H1 (cell line): ENCODE measurements at regions of chr6 and their contacts with region 1.

Region 1: DNA sequence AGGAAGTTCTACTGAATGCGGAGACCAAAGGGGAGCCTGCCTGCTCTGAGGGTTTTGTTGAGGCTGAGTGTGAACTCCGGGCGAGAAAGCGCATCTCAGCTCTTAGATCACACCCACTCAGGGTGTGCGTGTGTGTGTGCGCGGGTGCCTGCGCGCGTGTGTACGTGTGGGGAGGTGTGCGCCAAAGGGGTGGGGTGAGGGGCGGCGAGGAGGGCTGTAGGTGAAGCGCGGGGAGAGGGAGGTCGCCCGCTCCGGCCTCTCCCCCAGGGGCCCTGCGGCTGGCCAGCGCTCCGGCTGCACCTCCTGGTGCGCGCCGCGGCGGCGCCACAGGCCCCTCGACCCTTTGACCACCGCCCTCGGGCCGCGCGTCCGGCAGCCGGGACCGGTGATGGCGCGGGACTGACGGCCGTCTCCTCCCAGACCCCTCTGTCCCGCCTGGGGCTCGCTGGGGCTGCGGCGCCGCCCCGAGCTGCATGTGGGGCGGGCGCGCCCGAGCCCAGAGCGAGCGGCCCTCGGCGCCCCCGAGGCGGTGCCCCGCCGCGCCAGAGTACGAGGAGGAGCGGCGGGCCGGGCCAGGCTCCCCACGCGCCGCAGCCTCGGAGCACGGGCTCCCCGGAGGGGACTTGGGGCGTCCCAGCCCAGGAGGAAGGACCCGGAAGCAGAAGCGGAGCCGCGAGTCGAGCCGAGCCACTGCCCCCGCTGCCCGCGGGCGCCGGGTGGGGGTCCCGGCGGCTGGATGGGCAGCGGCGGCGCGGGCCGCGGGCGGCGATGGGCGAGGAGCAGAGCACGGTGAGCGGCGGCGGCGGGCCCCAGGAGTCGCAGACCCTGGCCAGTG is at the start of gene RNF217:
- DNase-seq: peak in 1 of 2 experiments; percentile 77
- H3K4me3 ChIP-seq: peak within 1 kb of the TSS; percentile 69 to 92 (median 81)
- H3K27ac ChIP-seq: no peak within 1 kb of the TSS; the same call in 1 of the 2 replicates
- H3K4me1 ChIP-seq: peaks cover 0 to 2% (median 0%) of the 10 kb centered on the region in 4 experiments; a peak in 2 of 7 replicates
- H3K27me3 ChIP-seq: peaks cover 0 to 5% (median 2%) of the 10 kb centered on the region in 4 experiments; a peak in 2 of 7 replicates
- CTCF ChIP-seq: no peak
- EP300 ChIP-seq: no peak
- POLR2A ChIP-seq: no peak
- RAD21 ChIP-seq: no peak
- total RNA-seq, gene RNF217: 8.9 and 12.0 TPM in 2 replicates

Region 2: GRCh38 chr6:124901084-124901483 is 60.9 kb before region 1 on chr6:
- CTCF ChIA-PET with region 1: no interaction called
- POLR2A ChIA-PET with region 1: no interaction called
- DNase-seq: no peak
- H3K4me3 ChIP-seq: no peak overlapping the region
- H3K27ac ChIP-seq: no peak overlapping the region
- H3K4me1 ChIP-seq: no peaks in the 10 kb centered on the region
- H3K27me3 ChIP-seq: no peaks in the 10 kb centered on the region
- CTCF ChIP-seq: no peak
- EP300 ChIP-seq: no peak
- POLR2A ChIP-seq: no peak
- RAD21 ChIP-seq: no peak

Region 3: DNA sequence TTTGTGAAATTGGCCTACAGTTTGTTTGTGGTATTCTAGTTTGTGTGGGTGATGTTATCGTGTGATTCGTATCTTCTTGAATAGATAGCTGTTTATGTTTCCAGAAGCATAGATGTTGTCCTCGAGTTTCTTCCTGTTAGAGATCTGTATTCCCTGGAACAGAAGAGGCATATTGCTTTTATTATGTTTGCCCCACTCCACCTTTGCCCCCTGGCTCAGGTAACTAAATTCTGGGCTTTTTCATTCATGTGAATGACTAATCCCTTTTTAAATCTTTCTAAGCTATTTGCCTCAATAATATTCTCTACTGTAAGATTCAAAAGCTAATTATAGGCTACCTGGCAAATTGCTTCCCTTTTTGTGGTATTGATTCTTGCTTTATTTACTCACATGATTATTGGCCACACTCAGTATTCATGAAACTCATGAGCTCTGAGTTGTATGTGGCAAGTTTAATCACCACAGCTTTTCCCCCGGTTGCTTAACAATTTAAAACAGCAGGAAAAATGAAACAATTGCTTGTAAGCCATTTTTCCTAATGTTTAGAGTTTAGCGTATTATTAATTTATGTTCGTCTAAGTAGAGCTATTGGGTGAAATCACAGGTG is 12.9 kb after region 1 on chr6:
- CTCF ChIA-PET with region 1: interaction called, 18 read pairs
- POLR2A ChIA-PET with region 1: interaction called, 9 read pairs
- DNase-seq: no peak
- H3K4me3 ChIP-seq: no peak overlapping the region
- H3K27ac ChIP-seq: no peak overlapping the region
- H3K4me1 ChIP-seq: peaks cover 0 to 3% (median 0%) of the 10 kb centered on the region in 4 experiments; a peak in 2 of 7 replicates
- H3K27me3 ChIP-seq: peaks cover 0 to 1% (median 0%) of the 10 kb centered on the region in 4 experiments; a peak in 2 of 7 replicates
- CTCF ChIP-seq: no peak
- EP300 ChIP-seq: no peak
- POLR2A ChIP-seq: no peak
- RAD21 ChIP-seq: no peak